ENCODE measurements at regions of chr1 and their contacts with region 1.

Region 1: GRCh38 chr1:234610348-234611152 is 572 bp upstream of the IRF2BP2 start:
- DNase-seq: peak; percentile 94
- ATAC-seq: peak; percentile 60
- H3K4me3 Mint-ChIP-seq: peak overlapping the region; percentile 93
- H3K27ac Mint-ChIP-seq: peak overlapping the region; percentile 96
- H3K4me1 Mint-ChIP-seq: peaks cover 43% of the 10 kb centered on the region
- H3K27me3 Mint-ChIP-seq: no peaks in the 10 kb centered on the region

Region 2: GRCh38 chr1:234584926-234585325 is 25.6 kb before region 1 on chr1:
- CTCF ChIA-PET with region 1: no interaction called
- DNase-seq: no peak
- ATAC-seq: no peak
- H3K4me3 Mint-ChIP-seq: no peak overlapping the region
- H3K27ac Mint-ChIP-seq: no peak overlapping the region
- H3K4me1 Mint-ChIP-seq: peaks cover 14% of the 10 kb centered on the region
- H3K27me3 Mint-ChIP-seq: peaks cover 14% of the 10 kb centered on the region

Region 3: DNA sequence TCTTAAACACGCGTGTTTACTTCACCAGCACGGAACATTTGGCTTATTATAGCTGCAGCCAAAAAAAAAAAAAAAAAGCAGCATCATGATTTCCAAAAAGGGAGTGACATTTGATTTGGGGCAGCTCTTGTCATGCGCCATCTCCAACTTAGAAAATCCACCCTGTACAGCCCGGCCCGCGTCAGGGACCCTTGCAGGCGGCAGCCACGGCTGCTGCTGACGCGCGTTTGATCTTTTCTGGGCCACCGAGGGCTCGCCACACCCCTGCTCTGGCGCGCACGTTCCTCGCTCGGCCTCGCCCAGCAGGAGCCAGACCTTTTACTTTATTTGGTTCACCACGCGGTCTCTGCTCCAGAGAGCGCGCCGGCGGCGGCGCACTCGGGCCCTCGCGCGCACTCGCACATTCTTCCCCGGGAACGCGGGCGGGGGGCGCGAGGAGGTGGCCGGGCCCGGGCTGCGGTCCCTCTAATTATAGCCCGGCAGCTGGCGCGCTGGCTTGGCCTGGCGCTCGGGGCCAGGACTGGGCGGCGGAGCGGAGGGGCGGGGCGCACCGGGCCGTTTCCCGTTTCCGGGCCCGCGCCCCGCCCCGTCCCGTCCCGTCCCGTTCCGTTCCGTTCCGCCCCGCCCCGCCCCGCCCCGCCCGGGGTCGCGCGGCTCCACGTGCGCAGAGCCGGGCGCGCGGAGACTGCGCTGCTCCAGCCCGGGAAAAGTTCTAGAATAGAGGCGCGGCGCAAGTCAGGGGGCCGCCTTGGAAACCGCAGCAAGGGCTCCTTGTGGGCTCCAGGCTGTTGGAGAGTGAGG is 10.7 kb before region 1 on chr1:
- CTCF ChIA-PET with region 1: interaction called, 41 read pairs
- DNase-seq: peak; percentile 84
- ATAC-seq: peak; percentile 81
- H3K4me3 Mint-ChIP-seq: peak overlapping the region; percentile 85
- H3K27ac Mint-ChIP-seq: peak overlapping the region; percentile 94
- H3K4me1 Mint-ChIP-seq: peaks cover 55% of the 10 kb centered on the region
- H3K27me3 Mint-ChIP-seq: no peaks in the 10 kb centered on the region

Region 4: DNA sequence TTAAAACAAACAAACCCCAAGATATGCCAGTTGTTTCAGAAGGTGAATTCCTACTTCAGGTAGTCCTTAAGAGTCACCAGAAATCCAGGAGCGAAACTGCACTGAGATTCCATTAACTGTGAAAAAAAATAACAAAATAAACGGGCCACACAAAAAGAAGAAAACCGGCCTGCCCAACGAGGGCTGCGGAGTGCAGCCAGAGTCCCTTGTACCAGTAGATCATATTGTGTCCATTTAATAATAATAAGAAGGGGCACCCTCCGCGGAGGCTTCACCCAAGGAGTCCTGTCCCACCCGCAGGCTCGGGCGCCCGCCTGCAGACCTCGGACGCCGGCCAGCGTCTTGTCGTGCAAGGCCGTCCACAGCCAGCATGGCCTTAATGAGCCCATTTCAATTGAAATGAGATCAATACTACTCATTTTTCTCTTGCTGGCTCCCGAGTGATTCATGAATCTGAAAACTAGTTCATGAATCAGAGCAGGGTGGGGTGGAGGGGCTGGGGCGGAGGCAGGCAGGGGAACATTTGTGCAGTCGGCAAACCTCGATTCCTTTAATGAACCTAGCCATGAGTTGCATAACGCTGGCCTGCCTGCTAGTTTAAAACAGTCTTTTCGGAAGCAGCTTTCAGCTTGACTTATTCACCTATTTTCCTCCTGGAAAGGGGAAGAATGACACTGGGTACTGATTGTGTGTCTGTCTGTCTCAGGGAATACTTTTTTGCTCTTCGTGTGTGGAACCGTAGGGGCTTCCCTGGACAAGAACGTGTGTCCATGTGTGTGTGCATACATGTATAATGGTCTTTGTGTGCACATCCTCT is 112.6 kb after region 1 on chr1:
- CTCF ChIA-PET with region 1: interaction called, 17 read pairs
- DNase-seq: peak; percentile 56
- ATAC-seq: peak; percentile 1
- H3K4me3 Mint-ChIP-seq: peak overlapping the region; percentile 66
- H3K27ac Mint-ChIP-seq: peak overlapping the region; percentile 98
- H3K4me1 Mint-ChIP-seq: peaks cover 57% of the 10 kb centered on the region
- H3K27me3 Mint-ChIP-seq: no peaks in the 10 kb centered on the region